ENCODE measurements at regions of chr4 and their contacts with region 1.

Region 1: DNA sequence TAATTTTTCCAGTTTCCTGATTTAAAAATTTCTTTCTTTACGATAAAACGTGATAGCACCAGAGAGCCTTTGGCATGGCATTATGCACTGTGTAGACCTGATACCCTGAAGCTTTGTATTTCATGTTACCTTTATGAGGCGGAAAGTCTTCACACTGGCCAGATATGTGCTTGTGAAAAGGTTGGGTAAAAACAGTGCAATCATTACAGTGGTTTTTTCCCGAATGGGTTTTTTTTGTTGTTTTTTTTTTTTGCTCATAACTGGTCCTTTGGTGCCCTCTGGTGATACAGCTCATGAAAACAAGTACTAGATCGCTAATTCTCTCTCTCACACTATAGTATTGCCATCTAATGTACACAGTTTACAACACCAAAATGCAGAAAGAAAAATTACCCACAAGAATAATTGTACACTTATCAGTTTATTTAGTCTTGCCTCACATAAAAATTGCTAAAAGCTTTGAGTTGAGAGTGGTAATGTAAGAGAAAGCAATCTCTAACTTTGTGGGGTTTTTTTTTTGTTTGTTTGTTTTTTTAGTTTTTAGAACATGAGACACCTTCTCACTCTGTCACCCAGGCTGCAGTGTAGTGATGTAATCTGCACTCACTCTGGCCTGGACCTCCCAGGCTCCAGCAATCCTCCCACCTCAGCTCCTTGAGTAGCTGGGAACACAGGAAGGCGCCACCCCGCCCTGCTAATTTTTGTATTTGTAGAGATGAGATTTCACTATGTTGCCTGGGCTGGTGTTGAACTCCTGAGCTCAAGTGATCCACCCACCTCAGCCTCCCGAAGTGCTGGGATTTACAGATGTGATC is 21.3 kb downstream of the SPCS3 start:
- DNase-seq: peak; percentile 69
- H3K4me3 ChIP-seq: no peak overlapping the region
- H3K27ac ChIP-seq: no peak overlapping the region
- H3K4me1 ChIP-seq: peaks cover 7% of the 10 kb centered on the region
- H3K27me3 ChIP-seq: no peaks in the 10 kb centered on the region
- CTCF ChIP-seq: peak; percentile 24 to 42
- POLR2A ChIP-seq: no peak

Region 2: DNA sequence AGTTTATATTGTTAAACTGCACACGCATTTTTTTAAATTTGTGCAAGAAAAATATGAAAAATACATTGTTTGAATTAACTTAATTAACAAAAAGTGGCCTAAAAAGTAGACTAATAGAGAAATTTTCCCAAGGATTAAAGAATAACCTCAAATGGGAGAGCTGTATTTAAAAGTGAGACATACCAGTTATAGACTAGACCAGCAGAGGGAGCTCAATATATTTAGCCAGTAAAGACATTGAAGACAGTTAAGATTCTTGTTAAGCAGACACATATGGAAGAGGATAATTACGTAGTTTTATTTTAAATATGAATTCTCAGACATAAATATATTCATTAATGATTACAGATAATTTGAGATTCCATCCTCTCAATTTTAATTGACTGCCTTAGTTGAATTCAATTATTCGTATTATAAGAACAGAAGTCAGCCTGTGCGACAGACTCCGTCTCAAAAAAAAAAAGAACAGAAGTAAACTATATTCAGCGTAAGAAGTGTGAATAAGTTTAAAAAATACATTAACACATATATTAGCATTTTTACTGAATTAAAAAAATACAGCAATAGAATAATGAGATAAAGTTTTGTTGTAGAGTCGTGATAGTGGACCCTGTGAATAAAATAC is 1576.9 kb before region 1 on chr4:
- CTCF ChIA-PET with region 1: interaction called, 6 read pairs
- POLR2A ChIA-PET with region 1: no interaction called
- dilution Hi-C with region 1: no loop called
- intact Hi-C with region 1: loop called (anchors 5 kb)
- DNase-seq: peak; percentile 6
- H3K4me3 ChIP-seq: no peak overlapping the region
- H3K27ac ChIP-seq: no peak overlapping the region
- H3K4me1 ChIP-seq: no peaks in the 10 kb centered on the region
- H3K27me3 ChIP-seq: no peaks in the 10 kb centered on the region
- CTCF ChIP-seq: peak in 1 of 2 donors; percentile 15
- POLR2A ChIP-seq: no peak

Region 3: GRCh38 chr4:176034499-176034898 is 306.6 kb before region 1 on chr4:
- CTCF ChIA-PET with region 1: interaction called, 7 read pairs
- POLR2A ChIA-PET with region 1: no interaction called
- dilution Hi-C with region 1: no loop called
- intact Hi-C with region 1: loop called (anchors 1 kb)
- DNase-seq: peak; percentile 14
- H3K4me3 ChIP-seq: no peak overlapping the region
- H3K27ac ChIP-seq: no peak overlapping the region
- H3K4me1 ChIP-seq: no peaks in the 10 kb centered on the region
- H3K27me3 ChIP-seq: no peaks in the 10 kb centered on the region
- CTCF ChIP-seq: no peak
- POLR2A ChIP-seq: no peak

Region 4: DNA sequence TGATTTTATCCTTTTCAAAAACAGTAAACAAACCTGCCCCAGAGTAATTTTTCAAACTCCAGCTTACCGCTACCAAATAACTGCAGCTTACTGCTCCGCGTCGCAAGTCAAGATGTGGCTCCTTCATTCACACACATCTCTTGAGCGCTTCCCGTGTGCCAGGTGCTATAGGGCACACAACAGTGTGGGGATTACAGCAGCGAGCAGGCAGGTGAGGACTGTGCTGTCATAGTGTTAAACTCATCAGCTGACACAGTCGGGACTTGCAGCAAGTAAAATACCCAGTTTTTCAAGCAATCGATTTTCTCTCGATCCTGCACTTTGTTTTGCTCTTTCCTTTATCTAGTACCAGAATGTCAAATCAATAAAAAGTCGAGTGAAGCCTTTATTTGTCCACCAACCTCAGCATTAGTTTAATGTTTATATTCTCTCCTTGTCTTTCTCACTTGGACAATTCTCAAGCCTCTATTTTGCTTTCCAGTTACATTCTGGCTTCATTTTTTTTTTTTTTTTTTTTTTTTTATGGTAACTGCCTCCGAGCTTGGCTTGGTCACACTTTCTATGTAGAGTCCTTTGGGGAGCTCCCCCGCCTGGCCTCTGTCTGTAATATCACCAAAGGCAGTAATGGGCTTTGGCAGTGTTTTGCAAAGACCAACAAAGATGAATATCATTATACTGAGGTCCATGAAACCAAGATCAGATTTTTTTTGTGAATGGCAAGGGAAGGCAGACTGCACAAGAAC is 63.7 kb before region 1 on chr4:
- CTCF ChIA-PET with region 1: interaction called, 18 read pairs
- POLR2A ChIA-PET with region 1: no interaction called
- dilution Hi-C with region 1: no loop called
- intact Hi-C with region 1: no loop called
- DNase-seq: peak; percentile 44
- H3K4me3 ChIP-seq: no peak overlapping the region
- H3K27ac ChIP-seq: no peak overlapping the region
- H3K4me1 ChIP-seq: no peaks in the 10 kb centered on the region
- H3K27me3 ChIP-seq: peaks cover 0 to 2% of the 10 kb centered on the region in 2 experiments
- CTCF ChIP-seq: peak in 1 of 2 donors; percentile 53
- POLR2A ChIP-seq: no peak

Measured in endothelial cell of umbilical vein (primary cell).